ENCODE measurements at regions of chr6 and their contacts with region 1.

Region 1: GRCh38 chr6:3561725-3562124 is 104.9 kb upstream of the SLC22A23 start:
- DNase-seq: no peak
- H3K4me3 ChIP-seq: no peak overlapping the region
- H3K27ac ChIP-seq: no peak overlapping the region
- H3K4me1 ChIP-seq: peaks cover 0 to 2% (median 0%) of the 10 kb centered on the region in 4 experiments; a peak in 2 of 7 replicates
- H3K27me3 ChIP-seq: no peaks in the 10 kb centered on the region
- CTCF ChIP-seq: peak; percentile 6 to 48 (median 33); a peak in 3 of 4 replicates
- EP300 ChIP-seq: no peak
- POLR2A ChIP-seq: no peak
- RAD21 ChIP-seq: peak; percentile 52 to 56

Region 2: GRCh38 chr6:1893470-1894130 is 1668.1 kb before region 1 on chr6:
- CTCF ChIA-PET with region 1: no interaction called
- POLR2A ChIA-PET with region 1: no interaction called
- DNase-seq: no peak
- H3K4me3 ChIP-seq: no peak overlapping the region
- H3K27ac ChIP-seq: no peak overlapping the region
- H3K4me1 ChIP-seq: no peaks in the 10 kb centered on the region
- H3K27me3 ChIP-seq: no peaks in the 10 kb centered on the region
- CTCF ChIP-seq: peak; percentile 26 to 72 (median 60)
- EP300 ChIP-seq: no peak
- POLR2A ChIP-seq: no peak
- RAD21 ChIP-seq: peak; percentile 73 to 83

Region 3: GRCh38 chr6:3518356-3519225 is 43.1 kb before region 1 on chr6:
- CTCF ChIA-PET with region 1: interaction called, 11 read pairs
- POLR2A ChIA-PET with region 1: no interaction called
- DNase-seq: no peak
- H3K4me3 ChIP-seq: no peak overlapping the region
- H3K27ac ChIP-seq: 0 out of 2 replicates have a peak overlapping the region, but pooled peaks have one; percentile 3
- H3K4me1 ChIP-seq: 0 out of 7 replicates have a peak, but pooled peaks cover 0 to 2% (median 0%) of the 10 kb centered on the region in 4 experiments
- H3K27me3 ChIP-seq: no peaks in the 10 kb centered on the region; a peak in 1 of 7 replicates
- CTCF ChIP-seq: no peak
- EP300 ChIP-seq: no peak
- POLR2A ChIP-seq: no peak
- RAD21 ChIP-seq: no peak

Measured in H1 (cell line).